A549 (cell line): ENCODE measurements at regions of chr2 and their contacts with region 1.

Region 1: GRCh38 chr2:232333361-232334270 is 44.9 kb upstream of the ALPP start:
- DNase-seq: peak; percentile 19 to 33
- ATAC-seq: peak in 1 of 2 experiments; percentile 71; a peak in 3 of 6 replicates
- H3K4me3 ChIP-seq: no peak overlapping the region
- H3K27ac ChIP-seq: 0 out of 6 replicates have a peak overlapping the region, but pooled peaks of 1 of the 2 experiments have one; percentile 10
- H3K4me1 ChIP-seq: no peaks in the 10 kb centered on the region
- CTCF ChIP-seq: peak; percentile 52
- EP300 ChIP-seq: no peak
- POLR2A ChIP-seq: no peak
- RAD21 ChIP-seq: no peak

Region 2: DNA sequence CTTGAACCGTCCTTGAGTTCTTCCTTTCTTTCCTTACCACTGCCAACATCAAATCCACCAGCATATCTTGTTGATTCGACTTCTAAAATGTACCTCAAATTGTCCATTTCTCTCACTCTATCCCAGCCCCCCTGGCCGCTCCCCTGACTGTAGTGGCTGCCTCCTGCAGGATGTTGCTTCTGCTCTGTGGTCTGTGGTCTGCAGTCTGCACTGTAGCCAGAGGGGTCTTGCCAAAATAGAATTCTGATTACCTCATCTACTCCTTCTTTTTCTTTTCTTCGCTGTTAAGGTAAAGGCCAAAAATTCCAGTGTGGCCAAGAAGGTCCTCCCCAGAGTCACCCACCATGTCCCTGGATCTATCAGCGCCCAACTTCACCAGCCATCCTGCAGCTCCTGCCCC is 34.5 kb before region 1 on chr2:
- CTCF ChIA-PET with region 1: no interaction called
- POLR2A ChIA-PET with region 1: no interaction called
- DNase-seq: no peak
- ATAC-seq: no peak
- H3K4me3 ChIP-seq: no peak overlapping the region
- H3K27ac ChIP-seq: no peak overlapping the region
- H3K4me1 ChIP-seq: peaks cover 21% of the 10 kb centered on the region
- CTCF ChIP-seq: no peak
- EP300 ChIP-seq: no peak
- POLR2A ChIP-seq: no peak
- RAD21 ChIP-seq: no peak

Region 3: GRCh38 chr2:232438951-232439757 is 105.5 kb after region 1 on chr2:
- CTCF ChIA-PET with region 1: interaction called, 24 read pairs
- POLR2A ChIA-PET with region 1: no interaction called
- DNase-seq: peak in 1 of 2 experiments; percentile 44
- ATAC-seq: peak; percentile 65 to 84
- H3K4me3 ChIP-seq: no peak overlapping the region
- H3K27ac ChIP-seq: no peak overlapping the region
- H3K4me1 ChIP-seq: peaks cover 11% of the 10 kb centered on the region
- CTCF ChIP-seq: peak; percentile 63
- EP300 ChIP-seq: no peak
- POLR2A ChIP-seq: no peak
- RAD21 ChIP-seq: peak; percentile 58 to 67

Region 4: DNA sequence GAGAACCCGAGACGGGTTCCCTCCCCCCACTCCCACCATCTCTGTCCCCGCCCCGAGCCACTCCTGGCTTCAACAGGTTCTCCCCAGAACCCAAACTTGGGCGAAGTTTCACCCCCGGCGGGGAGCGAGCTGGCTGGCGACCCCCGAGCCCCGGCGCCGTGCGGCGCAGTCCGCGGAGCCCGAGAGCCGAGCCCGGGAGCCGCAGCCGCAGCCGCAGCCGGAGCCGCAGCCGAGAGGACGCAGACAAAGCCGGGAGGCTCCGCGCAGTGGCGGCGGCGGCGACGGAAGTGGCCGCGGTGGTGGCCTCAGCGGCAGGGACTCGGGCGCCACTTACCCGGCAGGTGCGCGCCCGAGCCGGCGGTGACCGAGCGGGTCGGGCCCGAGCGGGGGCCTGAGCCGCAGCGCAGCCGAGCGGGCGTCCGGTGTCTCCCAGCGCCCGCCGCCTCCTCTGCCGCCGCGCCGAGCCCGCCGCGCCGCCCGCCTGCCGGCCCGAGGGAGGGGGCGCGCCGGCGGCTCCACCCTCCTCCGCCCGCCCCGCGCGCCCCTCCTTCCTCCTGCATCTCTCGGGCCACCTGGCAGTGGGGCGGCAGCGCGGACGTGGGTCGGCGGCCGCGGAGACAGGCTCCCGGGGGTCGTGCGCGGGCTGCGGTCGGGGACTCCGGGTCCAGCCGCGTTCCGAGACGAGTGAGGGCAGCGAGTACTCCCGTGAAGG is 153.9 kb after region 1 on chr2 and contains the start of gene ECEL1:
- CTCF ChIA-PET with region 1: no interaction called
- POLR2A ChIA-PET with region 1: no interaction called
- DNase-seq: no peak
- ATAC-seq: no peak; a peak in 1 of 6 replicates
- H3K4me3 ChIP-seq: peak within 1 kb of the TSS; percentile 43
- H3K27ac ChIP-seq: no peak within 1 kb of the TSS
- H3K4me1 ChIP-seq: peaks cover 6% of the 10 kb centered on the region; the same call in 1 of the 3 replicates
- CTCF ChIP-seq: no peak
- EP300 ChIP-seq: no peak
- POLR2A ChIP-seq: no peak
- RAD21 ChIP-seq: no peak
- polyA plus RNA-seq, gene ECEL1: 0.18 and 0.29 TPM in 2 replicates